MCF 10A (cell line): ENCODE measurements at regions of chr15 and their contacts with region 1.

Region 1: GRCh38 chr15:38275959-38276358 is 23.3 kb downstream of the SPRED1 start:
- DNase-seq: peak; percentile 46
- H3K4me3 Mint-ChIP-seq: no peak overlapping the region
- H3K27ac Mint-ChIP-seq: no peak overlapping the region
- H3K4me1 Mint-ChIP-seq: peaks cover 15% of the 10 kb centered on the region
- H3K27me3 Mint-ChIP-seq: no peaks in the 10 kb centered on the region
- CTCF ChIP-seq: no peak

Region 2: GRCh38 chr15:38260077-38260476 is 15.9 kb before region 1 on chr15:
- CTCF ChIA-PET with region 1: interaction called, 3 read pairs
- POLR2A ChIA-PET with region 1: interaction called, 188 read pairs
- intact Hi-C with region 1: no loop called
- DNase-seq: no peak
- H3K4me3 Mint-ChIP-seq: no peak overlapping the region
- H3K27ac Mint-ChIP-seq: no peak overlapping the region
- H3K4me1 Mint-ChIP-seq: peaks cover 27% of the 10 kb centered on the region
- H3K27me3 Mint-ChIP-seq: no peaks in the 10 kb centered on the region
- CTCF ChIP-seq: no peak